Mammary epithelial cell (primary cell): ENCODE measurements at regions of chr1 and their contacts with region 1.

Region 1: GRCh38 chr1:100875228-100875627 is 19.4 kb downstream of the EXTL2 start:
- DNase-seq: no peak
- H3K4me3 ChIP-seq: no peak overlapping the region
- H3K27ac ChIP-seq: no peak overlapping the region
- H3K4me1 ChIP-seq: no peaks in the 10 kb centered on the region
- H3K27me3 ChIP-seq: no peaks in the 10 kb centered on the region
- CTCF ChIP-seq: no peak

Region 2: DNA sequence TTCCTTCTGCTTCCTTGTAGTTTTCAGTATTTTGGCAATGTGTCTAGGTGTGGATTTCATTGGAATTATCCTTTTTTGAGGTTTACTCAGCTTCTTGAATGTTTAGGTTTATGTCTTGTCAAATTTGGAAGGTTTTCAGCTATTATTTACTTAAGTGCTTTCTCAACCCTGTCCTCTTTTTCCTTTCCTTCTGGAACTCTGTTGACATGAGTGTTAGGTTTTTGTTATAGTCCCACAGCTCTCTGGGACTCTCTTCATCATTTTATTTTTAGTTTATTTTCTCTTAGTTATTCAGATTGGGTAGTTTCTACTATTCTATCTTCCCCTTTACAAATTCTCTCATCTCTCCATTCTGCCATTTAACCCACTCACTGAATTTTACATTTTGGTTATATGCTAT is 400.4 kb before region 1 on chr1:
- CTCF ChIA-PET with region 1: no interaction called
- dilution Hi-C with region 1: loop called (anchors 10 kb)
- in situ Hi-C with region 1: no loop called
- intact Hi-C with region 1: no loop called
- DNase-seq: no peak
- H3K4me3 ChIP-seq: no peak overlapping the region
- H3K27ac ChIP-seq: no peak overlapping the region
- H3K4me1 ChIP-seq: no peaks in the 10 kb centered on the region
- H3K27me3 ChIP-seq: no peaks in the 10 kb centered on the region
- CTCF ChIP-seq: no peak

Region 3: DNA sequence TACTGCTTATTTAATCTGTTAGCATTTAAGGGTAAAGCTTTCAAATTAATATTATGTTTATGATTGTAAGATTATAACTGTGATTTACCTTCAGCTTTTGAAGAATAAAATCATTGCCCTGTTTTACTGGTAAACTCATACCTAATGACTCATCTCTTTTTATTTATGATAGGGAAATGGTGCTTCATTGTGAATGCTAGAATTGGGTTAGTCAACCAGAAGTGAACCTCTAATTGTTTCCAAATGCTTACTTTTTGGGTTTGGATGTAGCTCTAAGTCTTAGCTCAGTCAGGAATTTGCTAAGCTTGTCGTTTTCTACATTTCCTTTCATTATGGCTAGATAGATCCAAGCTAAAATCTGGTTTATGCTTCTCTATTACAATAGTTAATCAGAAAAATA is 80.1 kb after region 1 on chr1:
- CTCF ChIA-PET with region 1: no interaction called
- dilution Hi-C with region 1: no loop called
- in situ Hi-C with region 1: no loop called
- intact Hi-C with region 1: no loop called
- DNase-seq: peak; percentile 29
- H3K4me3 ChIP-seq: no peak overlapping the region
- H3K27ac ChIP-seq: no peak overlapping the region
- H3K4me1 ChIP-seq: peaks cover 9% of the 10 kb centered on the region
- H3K27me3 ChIP-seq: no peaks in the 10 kb centered on the region
- CTCF ChIP-seq: no peak

Region 4: GRCh38 chr1:101219924-101220695 is 344.9 kb after region 1 on chr1:
- CTCF ChIA-PET with region 1: no interaction called
- dilution Hi-C with region 1: no loop called
- in situ Hi-C with region 1: no loop called
- intact Hi-C with region 1: no loop called
- DNase-seq: no peak
- H3K4me3 ChIP-seq: no peak overlapping the region
- H3K27ac ChIP-seq: no peak overlapping the region
- H3K4me1 ChIP-seq: no peaks in the 10 kb centered on the region
- H3K27me3 ChIP-seq: no peaks in the 10 kb centered on the region
- CTCF ChIP-seq: no peak